Gastrocnemius medialis (tissue), 4 donors: ENCODE measurements at regions of chr15 and their contacts with region 1.

Region 1: GRCh38 chr15:45198337-45199135 is 10.8 kb upstream of the SHF start:
- DNase-seq: peak; percentile 92 to 96
- ATAC-seq: peak; percentile 80 to 82
- H3K4me3 ChIP-seq: peak overlapping the region; percentile 74 to 99 (median 93)
- H3K27ac ChIP-seq: peak overlapping the region; percentile 95 to 100 (median 99)
- H3K4me1 ChIP-seq: peaks cover 0 to 3% of the 10 kb centered on the region in 2 donors
- H3K27me3 ChIP-seq: no peaks in the 10 kb centered on the region
- CTCF ChIP-seq: peak; percentile 62 to 70 (median 64)
- POLR2A ChIP-seq: peak; percentile 85 to 87

Region 2: GRCh38 chr15:44728576-44729407 is 469.7 kb before region 1 on chr15:
- in situ Hi-C with region 1: no loop called
- intact Hi-C with region 1: loop called (anchors 2 kb)
- DNase-seq: peak; percentile 90 to 96
- ATAC-seq: peak; percentile 98
- H3K4me3 ChIP-seq: peak overlapping the region; percentile 60 to 98 (median 84)
- H3K27ac ChIP-seq: peak overlapping the region; percentile 87 to 100 (median 96)
- H3K4me1 ChIP-seq: peaks cover 16 to 24% of the 10 kb centered on the region in 2 donors
- H3K27me3 ChIP-seq: no peaks in the 10 kb centered on the region
- CTCF ChIP-seq: no peak
- POLR2A ChIP-seq: peak; percentile 80 to 87

Region 3: DNA sequence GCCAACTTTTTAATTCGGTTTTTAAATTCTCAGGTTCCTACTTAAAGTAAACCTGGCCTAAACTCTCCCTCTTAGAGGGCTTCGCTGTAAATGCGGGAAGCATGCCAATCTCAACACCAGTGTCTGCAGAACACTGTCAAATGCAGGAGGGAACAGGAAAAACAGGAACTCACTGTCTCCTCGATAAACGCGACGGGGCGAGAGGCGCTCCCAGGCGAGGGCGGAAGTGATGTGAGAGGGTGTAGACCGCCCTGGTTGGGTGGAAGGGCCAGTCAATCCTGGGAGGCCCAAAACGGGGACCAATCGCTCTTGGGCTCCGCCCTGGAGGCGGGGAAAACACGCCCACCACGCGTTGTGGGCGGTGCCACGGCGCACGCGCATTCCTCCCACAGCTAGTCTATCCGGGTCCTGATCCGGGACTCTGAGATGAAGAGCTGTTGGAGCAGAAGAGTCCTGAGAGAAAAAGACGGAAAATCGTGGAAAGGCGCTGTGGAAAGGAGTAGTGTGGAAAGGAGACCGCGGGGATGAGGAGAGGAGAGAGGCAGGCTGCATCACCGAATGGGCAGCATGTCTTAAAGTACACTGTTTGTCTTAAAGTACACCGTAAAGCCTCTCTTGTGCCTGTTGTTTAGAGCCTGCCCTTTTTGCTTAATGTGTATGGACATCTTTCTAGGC is 80.6 kb after region 1 on chr15:
- in situ Hi-C with region 1: no loop called
- intact Hi-C with region 1: loop called (anchors 2 kb)
- DNase-seq: peak; percentile 97 to 98
- ATAC-seq: peak; percentile 99
- H3K4me3 ChIP-seq: peak overlapping the region; percentile 58 to 82 (median 70)
- H3K27ac ChIP-seq: peak overlapping the region; percentile 81 to 95 (median 87)
- H3K4me1 ChIP-seq: peaks cover 5 to 13% of the 10 kb centered on the region in 2 donors
- H3K27me3 ChIP-seq: no peaks in the 10 kb centered on the region
- CTCF ChIP-seq: no peak
- POLR2A ChIP-seq: peak; percentile 83 to 87

Region 4: DNA sequence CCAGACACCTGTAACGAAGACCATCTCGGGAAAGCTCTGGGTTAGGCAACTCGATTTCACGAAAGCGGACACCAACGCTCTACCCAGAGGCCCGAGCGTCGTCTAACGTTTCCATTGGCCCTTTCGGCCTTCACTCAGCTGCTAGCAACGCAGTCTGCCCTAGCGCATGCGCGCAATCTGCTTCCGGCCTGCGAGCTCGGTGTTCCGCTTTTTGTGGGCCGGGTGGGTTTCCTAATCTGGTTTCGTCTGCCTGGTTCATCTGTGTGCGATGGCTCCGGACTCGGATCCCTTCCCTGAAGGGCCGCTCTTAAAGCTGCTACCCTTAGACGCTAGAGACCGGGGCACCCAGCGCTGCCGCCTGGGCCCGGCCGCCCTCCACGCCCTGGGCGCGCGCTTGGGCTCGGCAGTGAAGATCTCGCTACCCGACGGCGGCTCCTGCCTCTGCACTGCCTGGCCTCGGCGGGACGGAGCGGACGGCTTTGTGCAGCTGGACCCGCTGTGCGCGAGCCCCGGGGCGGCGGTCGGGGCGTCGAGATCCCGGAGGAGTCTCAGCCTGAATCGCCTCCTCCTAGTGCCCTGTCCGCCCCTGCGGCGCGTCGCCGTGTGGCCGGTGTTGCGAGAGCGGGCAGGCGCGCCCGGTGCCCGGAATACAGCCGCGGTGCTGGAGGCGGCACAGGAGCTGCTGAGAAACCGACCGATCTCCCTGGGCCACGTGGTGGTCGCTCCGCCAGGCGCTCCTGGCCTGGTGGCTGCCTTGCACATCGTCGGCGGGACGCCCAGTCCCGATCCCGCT is 203.8 kb after region 1 on chr15:
- in situ Hi-C with region 1: no loop called
- intact Hi-C with region 1: loop called (anchors 2 kb)
- DNase-seq: peak; percentile 95 to 97
- ATAC-seq: peak; percentile 98
- H3K4me3 ChIP-seq: peak overlapping the region; percentile 86 to 95 (median 92)
- H3K27ac ChIP-seq: peak overlapping the region; percentile 89 to 97 (median 94)
- H3K4me1 ChIP-seq: peaks cover 20 to 30% of the 10 kb centered on the region in 2 donors
- H3K27me3 ChIP-seq: no peaks in the 10 kb centered on the region
- CTCF ChIP-seq: no peak
- POLR2A ChIP-seq: peak; percentile 67 to 76

Region 5: GRCh38 chr15:45587095-45587860 is 388.7 kb after region 1 on chr15 and contains the start of gene BLOC1S6:
- in situ Hi-C with region 1: no loop called
- intact Hi-C with region 1: loop called (anchors 2 kb)
- DNase-seq: peak; percentile 78 to 82
- ATAC-seq: peak; percentile 96
- H3K4me3 ChIP-seq: peak within 1 kb of the TSS; percentile 87 to 98 (median 92)
- H3K27ac ChIP-seq: peak within 1 kb of the TSS; percentile 95 to 100 (median 97)
- H3K4me1 ChIP-seq: peaks cover 33 to 37% of the 10 kb centered on the region in 2 donors
- H3K27me3 ChIP-seq: no peaks in the 10 kb centered on the region
- CTCF ChIP-seq: peak in 1 of 5 experiments; percentile 15
- POLR2A ChIP-seq: peak; percentile 68 to 72
- total RNA-seq, gene BLOC1S6: 32.9 to 38.2 (median 36.6) TPM

Region 6: GRCh38 chr15:45641374-45641781 is 442.8 kb after region 1 on chr15:
- in situ Hi-C with region 1: loop called in 2 of 4 experiments (anchors 25 kb)
- intact Hi-C with region 1: loop called (anchors 2 kb)
- DNase-seq: peak; percentile 81 to 87
- ATAC-seq: peak; percentile 88
- H3K4me3 ChIP-seq: peak overlapping the region in 1 of 4 donors; percentile 30
- H3K27ac ChIP-seq: peak overlapping the region; percentile 98 to 99 (median 98)
- H3K4me1 ChIP-seq: peaks cover 82 to 92% of the 10 kb centered on the region in 2 donors
- H3K27me3 ChIP-seq: no peaks in the 10 kb centered on the region
- CTCF ChIP-seq: no peak
- POLR2A ChIP-seq: peak; percentile 21 to 34